ENCODE measurements at regions of chr16 and their contacts with region 1.

Region 1: DNA sequence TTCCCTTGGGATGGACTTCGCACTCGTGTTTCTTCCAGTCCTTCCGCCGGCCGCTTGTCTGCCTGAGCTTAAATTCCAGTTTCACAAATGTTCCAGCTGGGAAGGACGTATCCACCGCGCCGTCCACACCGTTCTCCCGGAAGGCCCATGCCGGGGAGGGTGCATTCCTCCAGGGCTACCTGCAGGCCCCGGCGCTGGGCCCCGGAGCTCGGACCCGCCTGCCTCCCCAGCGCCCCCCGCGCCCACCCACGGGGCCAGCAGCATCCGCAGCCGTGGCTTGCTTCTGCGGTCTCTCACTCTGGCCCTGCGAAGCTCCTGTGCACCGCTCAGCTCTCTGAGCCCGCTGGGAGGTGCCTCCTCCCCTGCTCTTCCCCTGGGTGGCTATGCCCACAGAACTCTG is 2084.1 kb downstream of the TP53TG3F start:
- DNase-seq: no peak
- ATAC-seq: no peak

Region 2: GRCh38 chr16:35252356-35252941 is 291.0 kb before region 1 on chr16:
- intact Hi-C with region 1: no loop called
- DNase-seq: no peak
- ATAC-seq: no peak

Region 3: DNA sequence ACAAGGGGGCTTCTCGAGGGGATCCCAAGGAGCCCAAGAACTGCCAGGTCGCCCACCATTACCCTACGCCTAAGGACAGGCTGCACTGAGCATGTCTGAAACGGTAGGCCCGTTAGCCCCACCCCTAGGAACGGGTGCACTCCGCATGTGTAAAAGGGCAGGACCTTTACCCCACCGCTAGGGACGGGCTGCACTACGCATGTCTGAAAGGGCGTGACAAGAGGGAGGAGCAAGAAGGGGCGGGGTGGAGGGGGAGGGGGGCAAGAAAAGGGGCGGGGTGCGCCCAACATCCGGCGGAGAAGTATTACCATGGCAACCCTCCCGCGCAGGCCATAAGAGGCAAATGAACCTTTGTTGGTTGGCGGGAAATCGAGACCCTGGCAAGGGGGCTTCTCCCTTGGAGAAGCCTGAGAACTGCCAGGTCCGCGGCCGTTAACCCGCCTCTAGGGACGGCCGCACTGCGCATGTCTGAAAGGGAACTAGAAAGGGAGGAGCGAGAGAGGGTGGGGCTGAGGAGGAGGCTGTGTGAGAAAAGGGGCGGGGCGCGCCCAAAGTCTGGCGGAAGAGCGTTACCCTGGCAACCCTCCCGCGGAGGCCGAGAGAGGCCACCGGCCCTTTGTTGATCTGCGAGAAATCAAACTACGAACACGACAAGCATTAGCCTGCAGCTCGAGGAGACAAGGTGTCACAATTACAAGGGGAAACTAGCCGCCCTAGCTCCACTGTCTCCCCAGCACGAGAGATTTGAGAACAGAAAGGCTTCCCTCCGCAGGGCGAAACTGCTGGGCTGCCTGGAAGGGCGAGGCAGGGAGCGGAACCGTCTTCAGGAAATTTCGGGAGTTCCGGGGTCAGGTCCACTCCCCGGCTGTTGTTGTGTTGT is 37.2 kb before region 1 on chr16:
- intact Hi-C with region 1: loop called (anchors 5 kb)
- DNase-seq: no peak
- ATAC-seq: no peak

Measured in Right ventricle myocardium inferior (tissue), 1 donor.